MCF 10A (cell line): ENCODE measurements at regions of chr14 and their contacts with region 1.

Region 1: DNA sequence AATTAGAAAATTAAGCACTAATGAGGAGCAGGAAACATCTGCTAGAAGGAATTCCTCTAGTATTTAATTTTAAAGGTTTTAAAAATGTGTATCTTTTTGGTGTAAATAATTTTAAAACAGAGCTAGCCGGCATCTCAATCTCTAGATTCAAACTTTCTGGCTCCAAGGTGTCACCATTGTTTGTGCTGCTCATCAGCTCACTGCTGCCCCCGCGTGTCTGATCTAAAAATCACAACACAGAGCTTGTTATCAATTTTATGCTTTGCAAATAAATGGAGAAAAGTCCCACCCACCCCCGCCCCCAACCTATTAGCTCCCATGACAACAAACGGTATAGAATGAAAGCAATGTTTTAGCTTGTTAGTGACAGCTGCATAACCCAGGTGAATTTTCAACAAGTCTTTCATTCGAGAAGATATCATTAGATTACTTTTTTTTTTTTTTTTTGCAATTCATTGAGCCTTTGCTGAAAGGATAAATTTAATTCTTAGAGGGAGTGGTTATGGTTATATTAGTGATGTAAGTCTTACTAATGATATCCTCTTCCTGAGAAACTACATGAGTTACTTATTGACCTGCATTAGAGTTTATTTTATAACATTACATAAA is 11.3 kb upstream of the ABHD12B start:
- DNase-seq: peak; percentile 79
- H3K4me3 Mint-ChIP-seq: peak overlapping the region; percentile 82
- H3K27ac Mint-ChIP-seq: peak overlapping the region; percentile 49
- H3K4me1 Mint-ChIP-seq: no peaks in the 10 kb centered on the region
- H3K27me3 Mint-ChIP-seq: no peaks in the 10 kb centered on the region
- CTCF ChIP-seq: peak; percentile 68

Region 2: GRCh38 chr14:50619556-50620141 is 240.9 kb before region 1 on chr14:
- CTCF ChIA-PET with region 1: interaction called, 6 read pairs
- POLR2A ChIA-PET with region 1: no interaction called
- intact Hi-C with region 1: loop called (anchors 10 kb)
- DNase-seq: peak; percentile 43
- H3K4me3 Mint-ChIP-seq: no peak overlapping the region
- H3K27ac Mint-ChIP-seq: no peak overlapping the region
- H3K4me1 Mint-ChIP-seq: peaks cover 7% of the 10 kb centered on the region
- H3K27me3 Mint-ChIP-seq: no peaks in the 10 kb centered on the region
- CTCF ChIP-seq: peak; percentile 57

Region 3: GRCh38 chr14:50804181-50804721 is 56.3 kb before region 1 on chr14:
- CTCF ChIA-PET with region 1: interaction called, 19 read pairs
- POLR2A ChIA-PET with region 1: interaction called, 4 read pairs
- intact Hi-C with region 1: no loop called
- DNase-seq: no peak
- H3K4me3 Mint-ChIP-seq: no peak overlapping the region
- H3K27ac Mint-ChIP-seq: no peak overlapping the region
- H3K4me1 Mint-ChIP-seq: no peaks in the 10 kb centered on the region
- H3K27me3 Mint-ChIP-seq: no peaks in the 10 kb centered on the region
- CTCF ChIP-seq: no peak

Region 4: GRCh38 chr14:50830932-50831725 is 29.5 kb before region 1 on chr14 and contains the start of gene NIN:
- CTCF ChIA-PET with region 1: interaction called, 54 read pairs
- POLR2A ChIA-PET with region 1: interaction called, 18 read pairs
- intact Hi-C with region 1: no loop called
- DNase-seq: peak; percentile 80
- H3K4me3 Mint-ChIP-seq: peak within 1 kb of the TSS; percentile 75
- H3K27ac Mint-ChIP-seq: peak within 1 kb of the TSS; percentile 20
- H3K4me1 Mint-ChIP-seq: peaks cover 21% of the 10 kb centered on the region
- H3K27me3 Mint-ChIP-seq: no peaks in the 10 kb centered on the region
- CTCF ChIP-seq: no peak
- total RNA-seq, gene NIN: 29.2 and 33.0 TPM in 2 replicates

Region 5: GRCh38 chr14:50871914-50872732 is 11.5 kb after region 1 on chr14 and contains the start of gene ABHD12B:
- CTCF ChIA-PET with region 1: interaction called, 16 read pairs
- POLR2A ChIA-PET with region 1: interaction called, 4 read pairs
- intact Hi-C with region 1: no loop called
- DNase-seq: no peak
- H3K4me3 Mint-ChIP-seq: no peak within 1 kb of the TSS
- H3K27ac Mint-ChIP-seq: no peak within 1 kb of the TSS
- H3K4me1 Mint-ChIP-seq: peaks cover 6% of the 10 kb centered on the region
- H3K27me3 Mint-ChIP-seq: peaks cover 41% of the 10 kb centered on the region
- CTCF ChIP-seq: no peak
- total RNA-seq, gene ABHD12B: not detected in 2 replicates

Region 6: DNA sequence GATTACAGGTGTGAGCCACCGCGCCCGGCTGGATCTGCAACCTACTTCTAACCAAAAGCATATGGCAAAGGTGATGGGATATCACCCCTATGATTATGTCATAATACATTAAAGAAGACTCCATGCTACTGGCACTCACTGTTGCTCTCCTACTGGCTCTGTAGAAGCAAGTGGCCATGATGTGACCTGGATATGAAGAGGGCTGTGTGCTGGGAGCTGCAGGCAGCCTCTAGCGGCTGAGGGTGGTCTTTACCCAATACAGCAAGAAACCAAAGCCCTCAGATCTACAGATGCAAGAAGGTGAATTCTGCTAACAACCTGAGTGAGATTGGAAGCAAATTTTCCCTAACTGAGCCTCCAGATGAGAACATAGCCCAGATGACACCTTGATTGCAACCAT is 268.5 kb after region 1 on chr14:
- CTCF ChIA-PET with region 1: no interaction called
- POLR2A ChIA-PET with region 1: no interaction called
- intact Hi-C with region 1: no loop called
- DNase-seq: no peak
- H3K4me3 Mint-ChIP-seq: no peak overlapping the region
- H3K27ac Mint-ChIP-seq: no peak overlapping the region
- H3K4me1 Mint-ChIP-seq: no peaks in the 10 kb centered on the region
- H3K27me3 Mint-ChIP-seq: peaks cover 15% of the 10 kb centered on the region
- CTCF ChIP-seq: no peak